A549 (cell line): ENCODE measurements at regions of chr19 and their contacts with region 1.

Region 1: DNA sequence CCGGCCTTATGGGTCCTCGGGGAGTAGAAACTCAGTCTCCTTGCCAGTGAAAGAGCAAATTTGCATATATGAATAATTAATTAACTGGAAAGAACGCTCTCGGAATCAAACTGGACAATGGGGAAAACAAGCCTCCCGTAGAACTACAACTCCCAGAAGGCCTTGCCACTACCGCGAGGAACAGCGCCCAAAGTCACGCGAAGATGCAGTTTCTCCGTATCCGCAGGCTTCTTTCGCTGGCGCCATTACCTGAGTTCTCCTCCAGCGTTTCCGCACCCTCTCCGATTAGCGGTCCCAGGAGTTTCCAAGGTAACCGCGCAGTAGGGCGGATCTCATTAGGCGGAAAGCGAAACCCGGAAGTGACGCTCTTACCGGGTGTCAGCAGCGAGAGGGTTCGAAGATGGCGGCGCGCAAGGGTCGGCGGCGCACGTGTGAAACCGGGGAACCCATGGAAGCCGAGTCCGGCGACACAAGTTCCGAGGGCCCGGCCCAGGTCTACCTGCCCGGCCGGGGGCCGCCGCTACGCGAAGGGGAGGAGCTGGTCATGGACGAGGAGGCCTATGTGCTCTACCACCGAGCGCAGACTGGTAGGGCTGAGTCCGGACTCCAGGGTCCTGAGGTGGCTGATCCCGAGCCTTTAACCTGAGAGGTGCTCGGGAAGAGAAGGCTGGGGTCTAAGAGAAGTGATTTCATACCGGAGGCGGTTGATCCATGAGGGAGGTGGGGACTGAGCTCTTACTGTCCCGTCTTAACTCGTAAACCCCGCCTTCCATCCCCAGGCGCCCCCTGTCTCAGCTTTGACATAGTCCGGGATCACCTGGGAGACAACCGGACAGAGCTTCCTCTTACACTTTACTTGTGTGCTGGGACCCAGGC is at the start of gene GRWD1:
- DNase-seq: peak; percentile 99 to 100
- ATAC-seq: peak; percentile 91 to 92
- H3K4me3 ChIP-seq: peak within 1 kb of the TSS; percentile 81
- H3K27ac ChIP-seq: peak within 1 kb of the TSS; percentile 90 to 91
- H3K4me1 ChIP-seq: peaks cover 23% of the 10 kb centered on the region
- CTCF ChIP-seq: peak; percentile 24
- EP300 ChIP-seq: no peak
- POLR2A ChIP-seq: peak; percentile 91
- RAD21 ChIP-seq: no peak
- polyA plus RNA-seq, gene GRWD1: 40.0 and 48.1 TPM in 2 replicates

Region 2: GRCh38 chr19:48363810-48364563 is 81.9 kb before region 1 on chr19 and contains the starts of genes SYNGR4 and TMEM143:
- CTCF ChIA-PET with region 1: interaction called, 3 read pairs
- POLR2A ChIA-PET with region 1: interaction called, 11 read pairs
- DNase-seq: peak; percentile 100
- ATAC-seq: peak; percentile 75 to 89
- H3K4me3 ChIP-seq: peak within 1 kb of the TSS; percentile 51
- H3K27ac ChIP-seq: peak within 1 kb of the TSS; percentile 90 to 97
- H3K4me1 ChIP-seq: peaks cover 8% of the 10 kb centered on the region
- CTCF ChIP-seq: no peak
- EP300 ChIP-seq: no peak
- POLR2A ChIP-seq: peak; percentile 70
- RAD21 ChIP-seq: no peak
- polyA plus RNA-seq, gene SYNGR4: 2.3 and 2.9 TPM in 2 replicates
- polyA plus RNA-seq, gene TMEM143: 7.4 and 7.6 TPM in 2 replicates

Region 3: DNA sequence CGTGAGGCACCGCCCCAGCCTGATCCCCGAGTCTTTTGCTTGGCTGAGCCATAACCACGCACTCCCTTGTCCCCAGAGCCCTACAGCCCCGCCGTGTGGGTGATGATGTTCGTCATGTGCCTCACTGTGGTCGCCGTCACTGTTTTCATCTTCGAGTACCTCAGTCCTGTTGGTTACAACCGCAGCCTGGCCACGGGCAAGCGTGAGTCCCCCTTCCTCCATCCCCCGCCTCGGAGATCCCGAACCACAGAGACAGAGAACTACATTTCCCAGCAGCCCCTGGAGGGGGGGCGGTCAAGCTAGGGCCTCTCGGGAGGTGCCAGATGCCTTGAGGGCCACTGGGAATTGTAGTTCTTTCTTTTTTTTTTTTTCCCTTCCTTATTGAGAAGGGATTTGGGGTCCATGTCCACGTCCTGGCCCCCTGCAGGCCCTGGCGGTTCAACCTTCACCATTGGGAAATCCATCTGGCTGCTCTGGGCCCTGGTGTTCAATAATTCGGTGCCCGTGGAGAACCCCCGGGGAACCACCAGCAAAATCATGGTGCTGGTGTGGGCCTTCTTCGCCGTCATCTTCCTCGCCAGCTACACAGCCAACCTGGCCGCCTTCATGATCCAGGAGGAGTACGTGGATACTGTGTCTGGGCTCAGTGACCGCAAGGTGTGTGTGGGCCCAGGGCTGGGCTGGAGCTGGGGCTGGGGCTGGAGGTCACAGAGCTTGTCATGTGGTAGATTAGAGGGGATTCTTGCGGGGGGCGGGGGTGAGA is 26.5 kb before region 1 on chr19:
- CTCF ChIA-PET with region 1: interaction called, 21 read pairs
- POLR2A ChIA-PET with region 1: no interaction called
- DNase-seq: peak in 1 of 2 experiments; percentile 59
- ATAC-seq: peak; percentile 25 to 71; a peak in 4 of 6 replicates
- H3K4me3 ChIP-seq: no peak overlapping the region
- H3K27ac ChIP-seq: 0 out of 6 replicates have a peak overlapping the region, but pooled peaks of 1 of the 2 experiments have one; percentile 7
- H3K4me1 ChIP-seq: peaks cover 2% of the 10 kb centered on the region; the same call in 2 of the 3 replicates
- CTCF ChIP-seq: no peak
- EP300 ChIP-seq: no peak
- POLR2A ChIP-seq: no peak
- RAD21 ChIP-seq: no peak

Region 4: GRCh38 chr19:48461982-48462655 is 16.3 kb after region 1 on chr19:
- CTCF ChIA-PET with region 1: interaction called, 23 read pairs
- POLR2A ChIA-PET with region 1: interaction called, 3 read pairs
- DNase-seq: peak in 1 of 2 experiments; percentile 72
- ATAC-seq: peak; percentile 49 to 68
- H3K4me3 ChIP-seq: no peak overlapping the region
- H3K27ac ChIP-seq: no peak overlapping the region
- H3K4me1 ChIP-seq: peaks cover 9% of the 10 kb centered on the region
- CTCF ChIP-seq: no peak
- EP300 ChIP-seq: no peak
- POLR2A ChIP-seq: no peak
- RAD21 ChIP-seq: no peak

Region 5: GRCh38 chr19:48487996-48488395 is 42.2 kb after region 1 on chr19:
- CTCF ChIA-PET with region 1: interaction called, 13 read pairs
- POLR2A ChIA-PET with region 1: interaction called, 5 read pairs
- DNase-seq: peak; percentile 88 to 98
- ATAC-seq: peak; percentile 47 to 59
- H3K4me3 ChIP-seq: peak overlapping the region; percentile 23; the same call in 1 of the 3 replicates
- H3K27ac ChIP-seq: peak overlapping the region; percentile 91 to 94
- H3K4me1 ChIP-seq: peaks cover 72% of the 10 kb centered on the region
- CTCF ChIP-seq: no peak
- EP300 ChIP-seq: peak; percentile 50 to 71; a peak in 3 of 5 replicates
- POLR2A ChIP-seq: no peak
- RAD21 ChIP-seq: peak; percentile 13 to 39; a peak in 2 of 5 replicates

Region 6: DNA sequence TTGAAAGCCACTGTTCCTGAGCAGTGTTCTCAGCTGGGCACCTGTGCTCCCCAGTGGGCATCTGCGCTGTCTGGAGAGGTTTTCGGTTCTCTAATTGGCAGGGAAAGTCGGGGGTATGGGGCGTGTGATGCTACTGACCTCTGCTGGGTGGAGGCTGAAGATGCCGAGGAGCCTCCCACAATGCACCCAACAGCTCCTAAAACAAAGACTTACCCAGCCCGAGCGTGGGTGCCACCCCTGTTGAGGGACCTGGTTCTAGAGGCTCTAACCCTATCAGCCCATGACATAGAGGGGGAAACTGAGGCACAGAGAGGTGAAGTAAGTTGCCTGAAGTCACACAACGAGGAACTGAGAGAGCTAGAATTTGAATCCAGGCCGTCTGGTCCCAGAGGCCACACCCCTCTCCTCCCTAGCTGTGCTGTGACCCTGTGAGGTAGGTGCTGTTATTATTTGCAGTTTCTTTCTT is 163.0 kb after region 1 on chr19:
- CTCF ChIA-PET with region 1: interaction called, 11 read pairs
- POLR2A ChIA-PET with region 1: interaction called, 4 read pairs
- DNase-seq: peak; percentile 83 to 88
- ATAC-seq: peak; percentile 75 to 82
- H3K4me3 ChIP-seq: no peak overlapping the region
- H3K27ac ChIP-seq: peak overlapping the region; percentile 65 to 78
- H3K4me1 ChIP-seq: peaks cover 5% of the 10 kb centered on the region; the same call in 1 of the 3 replicates
- CTCF ChIP-seq: peak; percentile 92
- EP300 ChIP-seq: no peak
- POLR2A ChIP-seq: no peak
- RAD21 ChIP-seq: peak; percentile 94 to 98